ENCODE measurements at regions of chr13 and their contacts with region 1.

Region 1: GRCh38 chr13:114065141-114065925 is 67.1 kb downstream of the RASA3 start:
- DNase-seq: peak; percentile 95
- ATAC-seq: peak; percentile 88
- H3K4me3 ChIP-seq: peak overlapping the region; percentile 64
- H3K27ac ChIP-seq: peak overlapping the region; percentile 100
- H3K4me1 ChIP-seq: peaks cover 43% of the 10 kb centered on the region
- H3K27me3 ChIP-seq: no peaks in the 10 kb centered on the region
- CTCF ChIP-seq: no peak

Region 2: DNA sequence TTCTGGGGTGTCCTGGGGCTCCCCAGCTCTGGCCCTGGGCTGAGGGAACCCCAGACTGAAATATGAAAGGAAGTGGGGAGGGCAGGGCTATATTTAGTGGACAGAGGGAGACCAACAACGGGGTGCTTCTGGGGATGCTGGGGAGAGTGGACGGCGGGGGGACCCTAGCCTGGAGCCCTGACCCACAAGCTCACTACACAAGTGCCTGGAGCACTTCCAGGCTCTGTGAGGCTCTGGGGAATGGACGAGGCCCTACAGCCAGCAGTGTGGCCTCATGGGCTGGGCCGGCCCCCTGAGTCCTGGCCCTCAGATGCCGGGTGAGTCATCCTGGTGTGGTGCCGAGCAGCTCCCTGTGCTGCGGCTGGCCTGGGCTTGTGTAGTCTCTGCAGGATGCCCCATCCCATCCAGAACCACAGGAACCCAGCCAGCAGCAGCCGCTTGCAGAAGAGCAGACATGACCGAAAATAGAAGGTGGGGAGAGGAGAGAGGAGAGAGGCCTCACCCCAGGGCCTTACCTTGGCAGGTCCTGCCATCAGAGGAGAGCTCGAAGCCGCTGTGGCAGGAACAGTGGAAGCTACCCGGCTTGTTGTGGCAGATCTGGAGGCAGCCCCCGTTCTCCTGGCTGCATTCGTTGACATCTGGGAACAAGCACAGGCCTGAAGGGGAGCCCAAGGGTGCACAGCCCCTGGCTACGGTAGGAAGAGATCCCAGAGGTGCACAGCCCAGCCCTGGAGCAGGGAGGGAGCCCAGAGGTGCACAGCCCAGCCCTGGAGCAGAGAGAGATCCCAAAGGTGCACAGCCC is 227.6 kb before region 1 on chr13:
- CTCF ChIA-PET with region 1: no interaction called
- POLR2A ChIA-PET with region 1: no interaction called
- intact Hi-C with region 1: no loop called
- DNase-seq: peak; percentile 84
- ATAC-seq: peak; percentile 92
- H3K4me3 ChIP-seq: peak overlapping the region; percentile 48
- H3K27ac ChIP-seq: peak overlapping the region; percentile 83
- H3K4me1 ChIP-seq: peaks cover 23% of the 10 kb centered on the region
- H3K27me3 ChIP-seq: no peaks in the 10 kb centered on the region
- CTCF ChIP-seq: no peak

Region 3: GRCh38 chr13:113976711-113977684 is 88.3 kb before region 1 on chr13:
- CTCF ChIA-PET with region 1: no interaction called
- POLR2A ChIA-PET with region 1: no interaction called
- intact Hi-C with region 1: loop called (anchors 10 kb)
- DNase-seq: peak; percentile 68
- ATAC-seq: peak; percentile 78
- H3K4me3 ChIP-seq: no peak overlapping the region
- H3K27ac ChIP-seq: no peak overlapping the region
- H3K4me1 ChIP-seq: peaks cover 21% of the 10 kb centered on the region
- H3K27me3 ChIP-seq: no peaks in the 10 kb centered on the region
- CTCF ChIP-seq: no peak

Region 4: GRCh38 chr13:114099191-114099590 is 33.9 kb after region 1 on chr13:
- CTCF ChIA-PET with region 1: no interaction called
- POLR2A ChIA-PET with region 1: no interaction called
- intact Hi-C with region 1: loop called (anchors 2 kb)
- DNase-seq: peak; percentile 73
- ATAC-seq: peak; percentile 85
- H3K4me3 ChIP-seq: no peak overlapping the region
- H3K27ac ChIP-seq: no peak overlapping the region
- H3K4me1 ChIP-seq: no peaks in the 10 kb centered on the region
- H3K27me3 ChIP-seq: no peaks in the 10 kb centered on the region
- CTCF ChIP-seq: no peak